ENCODE measurements at regions of chr4 and their contacts with region 1.

Region 1: GRCh38 chr4:163191999-163192398 is 25.3 kb upstream of the NAF1 start:
- DNase-seq: peak; percentile 11
- H3K4me3 ChIP-seq: no peak overlapping the region
- H3K27ac ChIP-seq: no peak overlapping the region
- H3K4me1 ChIP-seq: no peaks in the 10 kb centered on the region
- CTCF ChIP-seq: peak; percentile 69

Region 2: GRCh38 chr4:163048447-163048846 is 143.6 kb before region 1 on chr4:
- CTCF ChIA-PET with region 1: no interaction called
- POLR2A ChIA-PET with region 1: no interaction called
- intact Hi-C with region 1: loop called (anchors 10 kb)
- DNase-seq: peak; percentile 44
- H3K4me3 ChIP-seq: no peak overlapping the region
- H3K27ac ChIP-seq: no peak overlapping the region
- H3K4me1 ChIP-seq: no peaks in the 10 kb centered on the region
- CTCF ChIP-seq: peak; percentile 70

Region 3: GRCh38 chr4:163107754-163108153 is 84.2 kb before region 1 on chr4:
- CTCF ChIA-PET with region 1: no interaction called
- POLR2A ChIA-PET with region 1: no interaction called
- intact Hi-C with region 1: loop called (anchors 5 kb)
- DNase-seq: no peak
- H3K4me3 ChIP-seq: no peak overlapping the region
- H3K27ac ChIP-seq: no peak overlapping the region
- H3K4me1 ChIP-seq: no peaks in the 10 kb centered on the region
- CTCF ChIP-seq: peak; percentile 69

Region 4: DNA sequence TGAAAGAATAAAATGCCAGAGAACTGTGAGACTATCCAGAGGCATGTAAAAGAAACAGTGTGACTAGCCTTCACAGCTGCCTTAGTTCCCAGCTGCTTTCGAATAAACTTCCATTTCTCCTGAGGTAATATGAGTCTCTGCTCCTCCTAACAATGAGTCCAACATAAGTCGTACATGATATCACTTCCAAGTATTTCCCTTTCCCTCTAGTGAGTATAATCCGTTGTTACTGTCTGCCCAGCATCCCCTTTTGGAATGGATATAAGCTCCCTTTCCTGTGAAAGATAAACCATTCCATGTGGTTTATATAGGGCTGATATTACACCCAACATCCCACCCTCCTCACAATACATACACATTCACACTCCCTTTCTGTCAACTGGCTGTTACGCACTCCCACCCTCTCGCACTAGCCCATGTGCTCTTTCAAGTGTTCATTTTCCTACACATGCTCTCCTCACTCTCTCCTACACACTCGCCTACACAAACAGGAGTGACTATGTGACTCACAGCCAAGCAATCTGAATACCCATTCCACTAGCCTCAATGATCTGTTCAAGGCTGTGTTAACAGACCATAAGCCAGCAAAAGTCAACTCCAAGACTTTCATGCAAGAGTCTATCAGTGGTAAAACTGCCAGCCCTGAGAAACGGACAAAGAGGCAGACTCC is 30.3 kb before region 1 on chr4:
- CTCF ChIA-PET with region 1: no interaction called
- POLR2A ChIA-PET with region 1: no interaction called
- intact Hi-C with region 1: no loop called
- DNase-seq: no peak
- H3K4me3 ChIP-seq: no peak overlapping the region
- H3K27ac ChIP-seq: no peak overlapping the region
- H3K4me1 ChIP-seq: peaks cover 12% of the 10 kb centered on the region
- CTCF ChIP-seq: no peak

Region 5: GRCh38 chr4:163309466-163309865 is 117.5 kb after region 1 on chr4:
- CTCF ChIA-PET with region 1: no interaction called
- POLR2A ChIA-PET with region 1: no interaction called
- intact Hi-C with region 1: no loop called
- DNase-seq: no peak
- H3K4me3 ChIP-seq: no peak overlapping the region
- H3K27ac ChIP-seq: no peak overlapping the region
- H3K4me1 ChIP-seq: no peaks in the 10 kb centered on the region
- CTCF ChIP-seq: no peak

Measured in OCI-LY7 (cell line).